A549 (cell line): ENCODE measurements at regions of chr22 and their contacts with region 1.

Region 1: GRCh38 chr22:33579448-33580093 is 340.7 kb downstream of the LARGE1 start:
- DNase-seq: peak; percentile 41 to 68
- ATAC-seq: peak; percentile 91 to 97
- H3K4me3 ChIP-seq: no peak overlapping the region
- H3K27ac ChIP-seq: peak overlapping the region; percentile 11 to 64; a peak in 5 of 6 replicates
- H3K4me1 ChIP-seq: peaks cover 38% of the 10 kb centered on the region
- CTCF ChIP-seq: peak; percentile 72
- EP300 ChIP-seq: no peak
- POLR2A ChIP-seq: no peak
- RAD21 ChIP-seq: peak; percentile 88 to 91

Region 2: GRCh38 chr22:33296941-33297340 is 282.6 kb before region 1 on chr22:
- CTCF ChIA-PET with region 1: interaction called, 30 read pairs
- POLR2A ChIA-PET with region 1: no interaction called
- DNase-seq: no peak
- ATAC-seq: no peak
- H3K4me3 ChIP-seq: no peak overlapping the region
- H3K27ac ChIP-seq: no peak overlapping the region
- H3K4me1 ChIP-seq: peaks cover 2% of the 10 kb centered on the region; the same call in 1 of the 3 replicates
- CTCF ChIP-seq: no peak
- EP300 ChIP-seq: no peak
- POLR2A ChIP-seq: no peak
- RAD21 ChIP-seq: no peak

Region 3: DNA sequence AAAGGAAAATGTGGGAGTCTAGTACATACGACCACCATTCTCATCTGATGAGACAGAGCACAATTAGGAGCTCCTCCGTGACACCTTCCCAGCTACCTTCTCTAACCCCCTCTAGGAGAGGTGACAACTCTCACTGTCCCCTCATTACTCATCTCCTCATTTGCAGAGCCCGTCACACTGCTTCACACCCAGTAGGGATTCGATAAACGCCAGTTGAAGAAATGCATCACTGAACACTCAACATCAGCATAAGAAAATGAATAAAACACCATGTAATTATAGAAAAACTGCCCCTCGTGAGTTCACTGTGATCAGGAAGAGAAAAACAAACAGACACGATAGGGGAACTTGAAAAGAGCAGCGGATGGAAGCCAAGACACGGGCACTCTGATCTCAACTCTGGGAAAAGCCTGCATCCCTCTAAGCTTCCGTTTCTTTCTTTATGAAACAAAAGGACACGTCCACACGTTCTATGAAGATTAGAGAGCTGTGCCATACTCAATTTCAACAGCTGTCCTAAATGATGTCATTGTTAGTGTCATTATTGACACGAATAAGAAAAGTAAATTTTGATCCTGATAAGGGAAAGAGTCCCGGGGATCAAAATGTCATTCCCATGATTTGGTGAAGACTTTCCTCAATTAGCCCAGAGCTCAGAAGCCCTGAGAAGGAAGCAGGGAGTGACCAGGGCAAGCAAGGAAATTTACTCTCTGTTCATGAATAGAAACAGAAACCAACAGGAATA is 16.2 kb before region 1 on chr22:
- CTCF ChIA-PET with region 1: interaction called, 10 read pairs
- POLR2A ChIA-PET with region 1: no interaction called
- DNase-seq: no peak
- ATAC-seq: no peak
- H3K4me3 ChIP-seq: no peak overlapping the region
- H3K27ac ChIP-seq: no peak overlapping the region
- H3K4me1 ChIP-seq: 0 out of 3 replicates have a peak, but pooled peaks cover 6% of the 10 kb centered on the region
- CTCF ChIP-seq: no peak
- EP300 ChIP-seq: no peak
- POLR2A ChIP-seq: no peak
- RAD21 ChIP-seq: no peak